IMR-90 (cell line): ENCODE measurements at regions of chr10 and their contacts with region 1.

Region 1: GRCh38 chr10:88687853-88688467 is 18.1 kb upstream of the LIPK start:
- DNase-seq: peak; percentile 24
- ATAC-seq: peak; percentile 72; the same call in 1 of the 2 replicates
- H3K4me3 ChIP-seq: no peak overlapping the region
- H3K27ac ChIP-seq: no peak overlapping the region
- H3K4me1 ChIP-seq: no peaks in the 10 kb centered on the region
- H3K27me3 ChIP-seq: no peaks in the 10 kb centered on the region; the same call in 1 of the 2 replicates
- CTCF ChIP-seq: peak; percentile 75
- POLR2A ChIP-seq: no peak
- RAD21 ChIP-seq: peak; percentile 69

Region 2: DNA sequence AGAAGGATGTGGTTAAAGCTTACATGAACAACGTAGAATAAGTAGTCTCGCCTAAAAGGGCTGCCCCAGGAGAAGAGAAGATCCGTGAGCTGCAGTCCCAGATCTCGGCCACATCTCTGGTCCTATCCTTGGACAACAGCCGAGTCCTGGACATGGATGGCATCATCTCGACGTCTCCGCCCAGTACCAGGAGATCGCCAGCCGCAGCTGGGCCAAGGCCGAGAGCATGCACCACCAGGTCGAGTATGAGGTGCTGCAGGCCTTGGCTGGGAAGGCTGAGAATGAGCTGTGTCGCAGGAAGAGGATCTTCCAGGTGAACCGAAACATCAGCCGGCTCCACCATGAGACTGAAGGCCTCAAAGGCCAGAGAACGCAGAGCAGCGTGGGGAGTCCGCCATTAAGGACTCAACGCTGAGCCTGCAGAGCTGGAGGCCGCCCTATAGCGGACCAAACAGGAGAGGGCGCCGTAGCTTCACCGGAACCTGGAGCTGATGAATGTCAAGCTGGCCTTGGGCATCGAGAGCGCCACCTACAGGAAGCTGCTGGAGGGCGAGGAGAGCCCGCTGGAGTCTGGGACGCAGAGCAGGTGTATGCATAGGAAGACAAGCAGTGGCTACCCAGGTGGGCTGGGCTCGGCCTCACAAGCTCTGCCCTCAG is 40.3 kb after region 1 on chr10:
- CTCF ChIA-PET with region 1: no interaction called
- POLR2A ChIA-PET with region 1: interaction called, 14 read pairs
- dilution Hi-C with region 1: no loop called
- in situ Hi-C with region 1: no loop called
- intact Hi-C with region 1: no loop called
- DNase-seq: no peak
- ATAC-seq: no peak
- H3K4me3 ChIP-seq: no peak overlapping the region
- H3K27ac ChIP-seq: no peak overlapping the region
- H3K4me1 ChIP-seq: no peaks in the 10 kb centered on the region
- H3K27me3 ChIP-seq: peaks cover 19% of the 10 kb centered on the region
- CTCF ChIP-seq: peak; percentile 20; the same call in 1 of the 2 replicates
- POLR2A ChIP-seq: no peak
- RAD21 ChIP-seq: peak; percentile 12; the same call in 1 of the 2 replicates

Region 3: DNA sequence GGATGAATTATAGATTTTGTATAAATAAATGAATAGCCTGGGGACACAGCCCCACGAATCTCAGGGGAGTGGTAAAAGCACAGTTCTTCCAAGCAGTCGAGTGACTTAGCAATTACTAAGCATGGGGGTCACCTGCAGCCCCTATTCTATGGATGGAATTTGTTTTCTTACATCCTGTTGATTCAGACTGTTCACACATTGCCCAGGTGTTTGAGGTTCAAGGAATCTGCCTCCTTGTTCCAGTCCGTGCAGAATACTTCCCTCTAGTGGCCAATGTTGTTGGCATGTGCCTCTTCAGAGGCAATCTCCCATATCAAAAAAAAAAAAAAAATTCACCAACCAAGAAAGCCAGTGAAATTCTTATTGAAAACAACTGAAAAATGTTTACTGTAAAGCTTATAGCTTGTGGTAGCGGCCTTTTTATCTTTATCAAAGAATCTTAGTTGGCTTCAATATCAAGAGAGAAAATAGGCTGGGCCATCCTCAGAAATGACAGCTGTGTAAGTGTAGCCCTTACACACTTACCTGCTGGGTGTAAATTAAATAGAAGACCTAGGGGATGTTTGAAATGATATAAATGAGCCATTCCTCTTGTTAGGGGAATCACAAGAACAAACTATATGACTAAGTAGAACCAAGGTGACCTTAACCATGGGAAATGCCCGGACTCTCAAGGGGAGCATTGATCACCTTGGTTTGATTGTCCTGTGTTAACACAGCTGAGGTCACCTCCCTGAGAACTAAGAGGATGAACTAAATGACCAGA is 122.4 kb after region 1 on chr10:
- CTCF ChIA-PET with region 1: interaction called, 5 read pairs
- POLR2A ChIA-PET with region 1: no interaction called
- dilution Hi-C with region 1: no loop called
- in situ Hi-C with region 1: no loop called
- intact Hi-C with region 1: loop called (anchors 2 kb)
- DNase-seq: peak; percentile 72
- ATAC-seq: peak; percentile 75
- H3K4me3 ChIP-seq: no peak overlapping the region
- H3K27ac ChIP-seq: no peak overlapping the region
- H3K4me1 ChIP-seq: no peaks in the 10 kb centered on the region
- H3K27me3 ChIP-seq: peaks cover 8% of the 10 kb centered on the region
- CTCF ChIP-seq: peak; percentile 79
- POLR2A ChIP-seq: no peak
- RAD21 ChIP-seq: peak; percentile 67